Posterior vena cava (tissue), 2 donors: ENCODE measurements at regions of chr6 and their contacts with region 1.

Region 1: GRCh38 chr6:80060774-80061173 is 45.7 kb upstream of the BCKDHB start:
- DNase-seq: no peak

Region 2: DNA sequence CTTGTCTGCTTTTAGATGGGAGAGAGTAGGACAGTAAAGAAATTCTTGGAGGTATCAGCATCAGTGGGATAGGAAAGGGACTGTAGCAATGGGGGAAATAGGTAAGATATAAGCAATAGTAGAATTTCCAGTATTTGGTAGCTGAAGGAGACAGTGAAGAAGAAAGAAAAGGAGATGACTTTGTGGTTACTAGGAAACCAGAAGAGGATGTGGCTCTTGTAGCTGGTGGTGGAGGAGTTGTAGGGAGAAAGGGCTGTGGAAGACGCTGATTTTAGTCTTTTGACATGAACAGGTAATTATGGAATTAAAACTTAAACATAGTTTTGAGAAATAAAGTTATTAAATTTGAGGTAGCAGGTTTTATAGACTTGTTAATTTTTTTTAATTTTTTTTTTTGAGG is 403.5 kb before region 1 on chr6:
- intact Hi-C with region 1: no loop called
- DNase-seq: no peak

Region 3: DNA sequence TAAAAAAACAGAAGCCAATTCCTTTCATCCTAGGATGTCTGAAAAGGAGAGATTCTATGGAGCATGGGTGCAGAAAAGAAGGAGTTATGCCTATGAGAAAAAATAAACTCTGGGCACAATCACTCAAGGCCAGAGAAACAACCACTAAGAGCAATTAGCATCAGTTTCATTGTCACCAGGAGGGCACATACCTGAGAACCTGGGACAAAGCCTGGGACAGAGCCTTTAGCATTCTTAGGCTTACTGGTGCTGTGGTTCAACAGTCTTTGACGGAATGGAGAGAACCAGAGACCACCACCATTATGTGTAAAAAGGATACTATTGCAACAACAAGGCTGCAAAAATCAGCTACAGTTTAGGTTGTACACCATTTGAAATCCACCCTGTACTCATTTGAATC is 16.3 kb after region 1 on chr6:
- intact Hi-C with region 1: loop called in 1 of 2 experiments (anchors 1 kb)
- DNase-seq: no peak

Region 4: GRCh38 chr6:80523531-80523997 is 462.8 kb after region 1 on chr6:
- intact Hi-C with region 1: no loop called
- DNase-seq: no peak